ENCODE measurements at regions of chr20 and their contacts with region 1.

Region 1: GRCh38 chr20:37378785-37379598 is 33.1 kb downstream of the SRC start:
- DNase-seq: peak; percentile 75
- H3K4me3 Mint-ChIP-seq: peak overlapping the region; percentile 46
- H3K27ac Mint-ChIP-seq: peak overlapping the region; percentile 95
- H3K4me1 Mint-ChIP-seq: peaks cover 74% of the 10 kb centered on the region
- H3K27me3 Mint-ChIP-seq: no peaks in the 10 kb centered on the region
- CTCF ChIP-seq: no peak

Region 2: GRCh38 chr20:37396416-37397075 is 17.6 kb after region 1 on chr20:
- CTCF ChIA-PET with region 1: interaction called, 11 read pairs
- intact Hi-C with region 1: no loop called
- DNase-seq: no peak
- H3K4me3 Mint-ChIP-seq: no peak overlapping the region
- H3K27ac Mint-ChIP-seq: no peak overlapping the region
- H3K4me1 Mint-ChIP-seq: no peaks in the 10 kb centered on the region
- H3K27me3 Mint-ChIP-seq: no peaks in the 10 kb centered on the region
- CTCF ChIP-seq: no peak

Region 3: GRCh38 chr20:37407573-37408002 is 28.6 kb after region 1 on chr20:
- CTCF ChIA-PET with region 1: no interaction called
- intact Hi-C with region 1: no loop called
- DNase-seq: no peak
- H3K4me3 Mint-ChIP-seq: peak overlapping the region; percentile 63
- H3K27ac Mint-ChIP-seq: peak overlapping the region; percentile 69
- H3K4me1 Mint-ChIP-seq: peaks cover 37% of the 10 kb centered on the region
- H3K27me3 Mint-ChIP-seq: no peaks in the 10 kb centered on the region
- CTCF ChIP-seq: no peak

Region 4: DNA sequence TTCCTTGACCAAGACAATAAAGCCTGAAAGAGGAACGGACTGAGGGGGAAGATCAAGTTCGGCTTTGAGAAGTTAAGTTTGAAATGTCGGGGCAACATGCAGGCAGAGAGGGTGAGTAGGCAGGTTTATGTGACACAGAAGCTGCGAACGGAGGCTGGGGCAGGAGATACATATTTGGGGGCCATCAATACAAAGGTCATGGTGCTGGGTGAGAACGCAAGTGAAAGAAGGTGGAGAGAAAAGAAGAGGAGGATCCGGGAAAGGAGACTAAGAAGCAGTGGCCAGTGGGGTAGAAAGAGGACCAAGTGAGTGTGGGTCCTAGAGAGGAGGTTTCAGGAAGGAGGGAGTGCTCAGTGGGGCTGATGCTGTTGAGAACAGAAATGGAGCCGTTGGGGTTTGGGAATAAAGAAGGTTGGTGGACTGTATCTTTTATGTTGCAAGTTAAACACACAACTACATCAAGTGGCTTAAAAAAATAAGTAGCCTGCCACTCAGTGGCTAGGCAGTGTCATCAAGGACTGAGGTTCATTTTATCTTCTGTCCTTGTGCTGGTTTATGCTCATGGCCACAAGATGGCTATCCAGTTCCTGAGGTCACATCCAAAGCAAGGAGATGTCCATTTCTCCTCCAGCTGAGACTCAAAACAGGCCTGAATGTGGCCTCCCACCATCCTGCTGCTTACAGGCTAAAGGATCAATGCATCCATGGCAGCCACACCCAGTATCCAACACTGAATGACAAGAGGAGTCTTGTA is 150.4 kb after region 1 on chr20:
- CTCF ChIA-PET with region 1: no interaction called
- intact Hi-C with region 1: no loop called
- DNase-seq: no peak
- H3K4me3 Mint-ChIP-seq: no peak overlapping the region
- H3K27ac Mint-ChIP-seq: no peak overlapping the region
- H3K4me1 Mint-ChIP-seq: peaks cover 38% of the 10 kb centered on the region
- H3K27me3 Mint-ChIP-seq: peaks cover 48% of the 10 kb centered on the region
- CTCF ChIP-seq: no peak

Region 5: DNA sequence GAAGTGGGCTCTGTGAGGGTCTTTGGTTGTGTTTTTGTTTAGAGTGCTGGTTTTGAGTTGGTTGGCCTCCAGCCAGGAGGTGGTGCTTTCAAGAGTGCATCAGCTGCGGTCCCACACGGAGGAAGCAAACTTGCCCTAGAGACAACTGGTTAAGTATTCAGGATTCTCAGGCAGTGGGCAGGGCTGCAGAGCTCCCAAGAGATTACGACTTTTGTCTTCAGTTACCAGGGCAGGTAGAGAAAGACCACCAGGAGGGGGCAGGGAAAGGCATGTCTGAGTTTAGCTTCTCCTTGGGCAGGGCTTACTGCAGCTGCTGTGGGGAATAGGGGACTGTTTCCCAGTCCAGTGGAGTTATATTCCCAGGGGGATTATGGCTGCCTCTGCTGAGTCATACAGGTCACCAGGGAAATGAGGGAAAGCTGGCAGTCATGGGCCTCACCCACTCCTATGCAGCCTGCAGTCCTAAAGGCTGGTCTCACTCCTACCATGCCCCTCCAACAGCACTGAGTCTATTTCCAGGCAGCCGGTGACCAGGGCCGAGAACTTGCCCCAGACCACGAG is 589.9 kb after region 1 on chr20:
- CTCF ChIA-PET with region 1: no interaction called
- intact Hi-C with region 1: no loop called
- DNase-seq: no peak
- H3K4me3 Mint-ChIP-seq: no peak overlapping the region
- H3K27ac Mint-ChIP-seq: no peak overlapping the region
- H3K4me1 Mint-ChIP-seq: no peaks in the 10 kb centered on the region
- H3K27me3 Mint-ChIP-seq: peaks cover 34% of the 10 kb centered on the region
- CTCF ChIP-seq: no peak

Measured in Calu3 (cell line).